ENCODE measurements at regions of chr2 and their contacts with region 1.

Region 1: GRCh38 chr2:12587729-12588522 is 128.8 kb upstream of the TRIB2 start:
- DNase-seq: no peak
- H3K4me3 ChIP-seq: no peak overlapping the region
- H3K4me3 Mint-ChIP-seq: peak overlapping the region in 7 of 8 donors; percentile 25 to 82 (median 71)
- H3K27ac ChIP-seq: no peak overlapping the region
- H3K27ac Mint-ChIP-seq: peak overlapping the region; percentile 0 to 75 (median 60)
- H3K4me1 ChIP-seq: peaks cover 21% of the 10 kb centered on the region
- H3K4me1 Mint-ChIP-seq: peaks cover 24 to 39% (median 29%) of the 10 kb centered on the region in 4 donors
- H3K27me3 ChIP-seq: no peaks in the 10 kb centered on the region
- H3K27me3 Mint-ChIP-seq: no peaks in the 10 kb centered on the region

Region 2: DNA sequence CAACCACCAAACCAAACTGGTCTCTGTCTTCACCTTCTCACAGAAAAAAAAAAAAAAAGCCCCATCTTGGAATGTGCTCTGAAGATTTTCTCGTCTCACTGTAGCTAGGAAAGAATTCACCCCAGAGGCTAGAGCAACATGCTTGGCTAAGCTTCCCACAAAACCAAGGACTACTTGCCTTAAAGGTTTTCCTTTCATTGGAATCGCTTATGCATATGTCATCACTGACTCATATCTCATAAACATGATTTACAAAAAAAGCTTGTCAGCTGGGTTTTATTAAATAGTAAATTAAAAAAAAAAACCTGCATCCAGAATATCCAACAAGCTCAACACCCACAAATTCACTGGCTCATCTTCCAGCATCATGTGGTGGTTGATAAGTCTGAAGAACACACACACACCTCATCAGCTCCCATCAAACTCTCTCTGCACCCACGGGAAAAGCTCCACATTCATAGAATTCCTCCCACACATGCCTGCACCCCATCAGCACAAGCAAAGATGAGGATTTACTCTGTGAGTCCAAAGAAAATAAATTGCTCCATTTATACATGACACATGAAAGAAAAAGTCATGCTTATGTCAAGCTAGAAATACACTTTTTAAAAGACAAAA is 53.2 kb before region 1 on chr2:
- CTCF ChIA-PET with region 1: no interaction called
- POLR2A ChIA-PET with region 1: no interaction called
- intact Hi-C with region 1: loop called (anchors 10 kb)
- DNase-seq: no peak
- H3K4me3 ChIP-seq: no peak overlapping the region
- H3K4me3 Mint-ChIP-seq: peak overlapping the region in 6 of 8 donors; percentile 17 to 82 (median 30)
- H3K27ac ChIP-seq: no peak overlapping the region
- H3K27ac Mint-ChIP-seq: peak overlapping the region in 5 of 7 donors; percentile 35 to 78 (median 77)
- H3K4me1 ChIP-seq: peaks cover 25% of the 10 kb centered on the region
- H3K4me1 Mint-ChIP-seq: peaks cover 19 to 36% (median 28%) of the 10 kb centered on the region in 4 donors
- H3K27me3 ChIP-seq: no peaks in the 10 kb centered on the region
- H3K27me3 Mint-ChIP-seq: no peaks in the 10 kb centered on the region

Region 3: GRCh38 chr2:12560618-12561017 is 27.3 kb before region 1 on chr2:
- CTCF ChIA-PET with region 1: no interaction called
- POLR2A ChIA-PET with region 1: no interaction called
- intact Hi-C with region 1: no loop called
- DNase-seq: no peak
- H3K4me3 ChIP-seq: no peak overlapping the region
- H3K4me3 Mint-ChIP-seq: no peak overlapping the region
- H3K27ac ChIP-seq: no peak overlapping the region
- H3K27ac Mint-ChIP-seq: no peak overlapping the region
- H3K4me1 ChIP-seq: peaks cover 17% of the 10 kb centered on the region
- H3K4me1 Mint-ChIP-seq: peaks cover 24 to 39% (median 34%) of the 10 kb centered on the region in 4 donors
- H3K27me3 ChIP-seq: no peaks in the 10 kb centered on the region
- H3K27me3 Mint-ChIP-seq: no peaks in the 10 kb centered on the region